ENCODE measurements at regions of chr11 and their contacts with region 1.

Region 1: DNA sequence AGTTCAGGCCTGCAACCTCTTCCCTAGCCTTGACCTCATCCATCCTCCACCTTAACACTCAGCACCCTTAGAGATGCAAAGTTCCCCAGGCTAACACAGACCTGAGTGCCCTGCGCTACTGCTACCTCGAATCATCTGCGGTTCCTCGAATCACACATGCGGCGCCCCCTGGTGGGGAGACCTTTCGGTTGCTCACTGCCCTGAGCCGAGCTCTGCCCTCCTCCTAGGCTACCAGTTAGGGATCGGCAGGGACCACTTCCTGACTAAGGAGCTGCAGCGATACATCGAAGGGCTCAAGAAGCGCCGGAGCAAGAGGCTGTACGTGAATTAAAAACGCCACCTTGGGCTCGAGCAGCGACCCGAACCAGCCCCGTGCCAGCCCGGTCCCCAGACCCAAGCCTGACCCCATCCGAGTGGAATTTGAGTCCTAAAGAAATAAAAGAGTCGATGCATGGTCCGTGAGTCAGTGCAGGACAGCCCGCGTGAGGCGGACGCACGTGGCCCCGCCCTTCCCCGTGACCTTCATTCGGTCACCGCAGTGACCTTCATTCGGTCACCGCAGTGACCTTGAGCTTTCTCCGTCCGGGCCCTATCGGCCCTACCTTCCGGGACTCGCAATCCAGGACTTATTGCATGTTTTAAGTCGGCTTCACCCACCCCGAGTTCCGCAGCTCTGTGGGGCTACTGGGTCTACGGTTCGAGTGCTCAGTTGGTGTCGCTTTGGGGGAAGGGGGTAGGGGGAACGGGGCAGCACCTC is 830 bp upstream of the ESRRA start:
- DNase-seq: peak; percentile 97
- H3K4me3 Mint-ChIP-seq: peak overlapping the region; percentile 80
- H3K27ac Mint-ChIP-seq: peak overlapping the region; percentile 94
- H3K4me1 Mint-ChIP-seq: peaks cover 34% of the 10 kb centered on the region
- H3K27me3 Mint-ChIP-seq: peaks cover 19% of the 10 kb centered on the region

Region 2: GRCh38 chr11:63986156-63986931 is 318.1 kb before region 1 on chr11 and contains the start of gene OTUB1:
- CTCF ChIA-PET with region 1: no interaction called
- POLR2A ChIA-PET with region 1: no interaction called
- intact Hi-C with region 1: loop called (anchors 10 kb)
- DNase-seq: peak; percentile 93
- H3K4me3 Mint-ChIP-seq: peak within 1 kb of the TSS; percentile 94
- H3K27ac Mint-ChIP-seq: peak within 1 kb of the TSS; percentile 91
- H3K4me1 Mint-ChIP-seq: peaks cover 20% of the 10 kb centered on the region
- H3K27me3 Mint-ChIP-seq: no peaks in the 10 kb centered on the region
- total RNA-seq, gene OTUB1: 69.5 to 72.2 TPM

Region 3: GRCh38 chr11:64071849-64072248 is 232.6 kb before region 1 on chr11:
- CTCF ChIA-PET with region 1: no interaction called
- POLR2A ChIA-PET with region 1: no interaction called
- intact Hi-C with region 1: no loop called
- DNase-seq: no peak
- H3K4me3 Mint-ChIP-seq: no peak overlapping the region
- H3K27ac Mint-ChIP-seq: no peak overlapping the region
- H3K4me1 Mint-ChIP-seq: peaks cover 10% of the 10 kb centered on the region
- H3K27me3 Mint-ChIP-seq: no peaks in the 10 kb centered on the region

Region 4: DNA sequence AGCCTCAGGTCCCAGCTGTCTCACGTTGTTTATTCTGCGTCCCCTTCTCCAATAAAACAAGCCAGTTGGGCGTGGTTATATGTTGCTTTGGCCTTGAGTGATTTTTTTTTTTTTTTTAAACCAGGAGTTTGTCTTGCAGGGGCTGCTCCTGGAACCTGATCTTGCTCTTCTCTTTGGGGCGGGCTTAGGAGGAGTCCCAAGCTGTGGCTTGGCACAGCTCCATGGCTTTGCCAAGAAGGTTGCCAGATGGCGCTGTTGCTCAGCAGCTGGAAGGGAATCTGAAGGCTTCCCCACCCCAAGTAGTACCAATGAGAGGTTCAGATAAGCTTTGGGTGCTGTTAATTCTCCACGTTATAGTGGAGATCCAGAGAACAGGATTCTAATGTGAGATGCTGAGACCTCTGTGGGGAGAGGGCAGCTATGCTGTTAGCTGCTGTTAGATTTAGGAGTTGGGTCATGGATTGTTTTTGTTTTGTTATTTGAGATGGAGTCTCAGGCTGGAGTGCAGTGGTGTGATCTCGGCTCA is 100.0 kb before region 1 on chr11:
- CTCF ChIA-PET with region 1: interaction called, 106 read pairs
- POLR2A ChIA-PET with region 1: interaction called, 16 read pairs
- intact Hi-C with region 1: loop called (anchors 1 kb)
- DNase-seq: peak; percentile 88
- H3K4me3 Mint-ChIP-seq: peak overlapping the region; percentile 64
- H3K27ac Mint-ChIP-seq: peak overlapping the region; percentile 87
- H3K4me1 Mint-ChIP-seq: peaks cover 44% of the 10 kb centered on the region
- H3K27me3 Mint-ChIP-seq: no peaks in the 10 kb centered on the region

Region 5: DNA sequence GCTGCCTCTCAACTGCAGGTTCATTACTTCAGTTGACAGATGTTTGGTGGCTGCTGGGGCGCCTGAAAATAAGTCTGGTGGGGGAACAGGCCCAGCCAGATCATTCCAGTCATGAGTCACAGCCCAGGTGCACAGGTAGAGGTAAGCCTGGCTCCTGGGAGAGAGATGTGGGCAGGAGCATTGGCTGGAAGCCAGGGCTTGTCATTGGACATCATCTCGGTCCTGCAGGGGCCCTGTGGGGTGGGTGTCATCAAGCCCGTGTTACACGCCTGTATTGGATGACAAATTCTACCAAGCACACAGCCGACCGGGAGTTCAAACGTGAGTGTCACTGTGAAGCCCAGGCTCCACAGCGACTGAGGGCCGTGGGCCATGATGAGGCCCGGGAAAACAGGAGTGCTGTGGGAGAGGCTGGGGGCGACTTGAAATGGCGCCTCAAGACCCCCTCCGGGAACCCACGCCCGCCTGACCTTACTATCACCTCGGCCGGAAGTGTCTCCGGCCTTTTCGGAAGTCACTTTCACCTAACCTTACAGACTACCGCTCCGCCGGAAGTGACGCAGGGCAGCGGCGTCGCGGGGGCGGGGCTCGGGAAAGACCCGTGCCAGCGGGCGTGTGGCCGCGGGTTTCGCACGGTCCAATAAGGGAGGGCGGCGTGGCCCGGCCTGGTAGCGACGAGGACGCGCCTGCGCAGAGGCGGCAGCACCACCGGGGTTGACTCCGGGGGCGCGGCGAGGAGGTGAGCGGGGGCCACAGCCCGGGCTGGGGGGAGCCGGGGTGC is 63.9 kb before region 1 on chr11 and contains the start of gene FKBP2:
- CTCF ChIA-PET with region 1: interaction called, 28 read pairs
- POLR2A ChIA-PET with region 1: interaction called, 5 read pairs
- intact Hi-C with region 1: loop called (anchors 1 kb)
- DNase-seq: peak; percentile 98
- H3K4me3 Mint-ChIP-seq: peak within 1 kb of the TSS; percentile 89
- H3K27ac Mint-ChIP-seq: peak within 1 kb of the TSS; percentile 98
- H3K4me1 Mint-ChIP-seq: peaks cover 37% of the 10 kb centered on the region
- H3K27me3 Mint-ChIP-seq: no peaks in the 10 kb centered on the region
- total RNA-seq, gene FKBP2: 28.7 to 34.9 TPM

Region 6: GRCh38 chr11:64256300-64256699 is 48.2 kb before region 1 on chr11:
- CTCF ChIA-PET with region 1: interaction called, 29 read pairs
- POLR2A ChIA-PET with region 1: no interaction called
- intact Hi-C with region 1: no loop called
- DNase-seq: no peak
- H3K4me3 Mint-ChIP-seq: no peak overlapping the region
- H3K27ac Mint-ChIP-seq: no peak overlapping the region
- H3K4me1 Mint-ChIP-seq: peaks cover 16% of the 10 kb centered on the region
- H3K27me3 Mint-ChIP-seq: no peaks in the 10 kb centered on the region

Region 7: DNA sequence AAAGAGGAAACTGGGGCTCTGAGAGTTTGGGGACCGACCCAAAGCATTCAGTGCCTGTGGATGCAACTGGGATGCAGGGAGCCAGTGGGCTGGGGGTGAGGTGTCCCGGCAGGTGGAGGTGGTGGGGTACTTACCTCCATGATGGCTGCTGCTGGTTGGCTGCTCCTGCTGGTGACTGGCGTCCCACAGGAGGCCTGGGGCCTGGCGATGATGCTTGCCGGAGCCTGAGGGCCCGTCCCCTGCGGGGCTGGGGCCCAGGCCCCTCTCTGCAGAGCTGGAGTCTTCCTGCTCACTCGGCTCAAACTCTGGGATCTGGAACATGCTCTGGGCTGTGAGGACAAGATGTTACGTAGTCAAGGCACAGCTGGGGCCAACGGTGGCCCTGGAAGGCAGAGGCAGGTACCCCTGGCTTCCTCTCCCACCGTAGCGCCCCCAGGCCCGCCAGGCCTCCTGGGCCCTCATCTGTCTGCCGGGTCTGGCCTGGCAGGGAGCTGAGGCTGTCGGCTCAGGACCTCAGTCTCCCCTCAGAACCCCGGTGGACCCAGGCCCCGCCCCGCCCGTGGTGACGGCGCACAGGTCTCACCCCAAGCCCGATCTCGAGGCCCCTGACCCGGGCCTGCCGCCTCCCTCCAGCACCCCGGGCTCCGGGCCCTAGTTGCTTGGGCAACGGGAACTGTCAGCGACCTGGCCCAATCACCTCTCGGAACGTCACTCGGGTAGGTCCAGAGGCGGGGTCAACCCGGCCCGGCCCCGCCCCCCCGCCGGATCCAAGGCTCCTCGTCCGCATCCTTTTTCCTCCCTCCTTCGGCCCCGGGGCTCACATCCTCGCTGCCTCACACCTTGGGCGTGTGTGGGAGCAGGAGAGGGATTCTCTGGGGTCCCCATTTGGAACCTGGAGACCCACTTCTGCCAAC is 20.2 kb before region 1 on chr11 and contains the start of gene BAD:
- CTCF ChIA-PET with region 1: interaction called, 74 read pairs
- POLR2A ChIA-PET with region 1: interaction called, 5 read pairs
- intact Hi-C with region 1: loop called (anchors 1 kb)
- DNase-seq: peak; percentile 96
- H3K4me3 Mint-ChIP-seq: peak within 1 kb of the TSS; percentile 83
- H3K27ac Mint-ChIP-seq: peak within 1 kb of the TSS; percentile 91
- H3K4me1 Mint-ChIP-seq: peaks cover 14% of the 10 kb centered on the region
- H3K27me3 Mint-ChIP-seq: no peaks in the 10 kb centered on the region
- total RNA-seq, gene BAD: 23.7 to 24.2 TPM

Region 8: GRCh38 chr11:64317957-64318693 is 13.6 kb after region 1 on chr11 and contains the start of gene PRDX5:
- CTCF ChIA-PET with region 1: interaction called, 29 read pairs
- POLR2A ChIA-PET with region 1: interaction called, 22 read pairs
- intact Hi-C with region 1: loop called (anchors 1 kb)
- DNase-seq: peak; percentile 97
- H3K4me3 Mint-ChIP-seq: peak within 1 kb of the TSS; percentile 92
- H3K27ac Mint-ChIP-seq: peak within 1 kb of the TSS; percentile 99
- H3K4me1 Mint-ChIP-seq: peaks cover 28% of the 10 kb centered on the region
- H3K27me3 Mint-ChIP-seq: no peaks in the 10 kb centered on the region
- total RNA-seq, gene PRDX5: 156 to 164 TPM

Measured in activated CD4-positive, alpha-beta memory T cell treated with anti-CD3 and anti-CD28 coated beads for 36 hours (primary cell).